ENCODE measurements at regions of chr3 and their contacts with region 1.

Region 1: GRCh38 chr3:171566803-171567422 is 106.7 kb upstream of the TNIK start:
- DNase-seq: no peak
- H3K4me3 ChIP-seq: no peak overlapping the region
- H3K27me3 ChIP-seq: peaks cover 2% of the 10 kb centered on the region; the same call in 1 of the 2 replicates
- CTCF ChIP-seq: peak; percentile 65

Region 2: DNA sequence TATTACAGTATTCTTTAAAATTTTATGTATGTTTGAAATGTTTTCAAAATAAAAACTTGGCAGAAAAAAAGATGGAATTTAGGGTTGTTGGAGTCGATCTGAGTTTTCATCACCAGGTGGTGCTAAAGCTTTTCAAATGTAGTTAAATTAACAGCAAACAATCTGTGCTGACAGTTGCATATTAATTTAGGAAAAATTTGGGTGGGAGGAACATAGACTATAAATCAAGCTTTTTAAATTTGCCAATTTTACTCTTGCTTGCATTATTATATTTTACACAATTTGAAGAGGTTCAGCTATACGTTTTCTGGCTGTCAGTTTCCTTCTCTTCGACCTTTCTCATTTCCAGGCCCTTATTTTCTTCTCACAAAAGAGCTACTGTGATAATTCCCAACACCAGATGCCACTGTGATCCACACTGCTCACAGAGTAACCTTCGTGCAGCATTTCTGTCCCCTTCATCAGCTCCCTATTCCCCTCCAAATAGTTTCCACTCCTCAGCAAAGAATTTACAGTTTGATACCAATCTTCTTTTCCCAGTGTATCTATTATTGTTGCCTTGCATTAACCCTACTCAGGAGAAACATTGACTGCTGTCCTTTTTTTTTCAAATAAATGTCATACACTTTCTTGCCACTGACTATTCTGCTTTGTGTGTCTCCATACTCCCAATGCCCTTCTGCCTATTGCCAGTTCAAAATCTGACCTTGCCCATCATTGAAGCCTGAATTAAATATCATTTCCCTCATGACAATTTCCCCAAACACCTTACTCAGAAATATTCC is 605.1 kb before region 1 on chr3:
- CTCF ChIA-PET with region 1: interaction called, 69 read pairs
- POLR2A ChIA-PET with region 1: no interaction called
- DNase-seq: no peak
- H3K4me3 ChIP-seq: no peak overlapping the region
- H3K27me3 ChIP-seq: no peaks in the 10 kb centered on the region
- CTCF ChIP-seq: peak; percentile 51

Region 3: GRCh38 chr3:171049861-171050444 is 517.0 kb before region 1 on chr3:
- CTCF ChIA-PET with region 1: interaction called, 42 read pairs
- POLR2A ChIA-PET with region 1: no interaction called
- DNase-seq: no peak
- H3K4me3 ChIP-seq: no peak overlapping the region
- H3K27me3 ChIP-seq: no peaks in the 10 kb centered on the region
- CTCF ChIP-seq: peak; percentile 74

Region 4: DNA sequence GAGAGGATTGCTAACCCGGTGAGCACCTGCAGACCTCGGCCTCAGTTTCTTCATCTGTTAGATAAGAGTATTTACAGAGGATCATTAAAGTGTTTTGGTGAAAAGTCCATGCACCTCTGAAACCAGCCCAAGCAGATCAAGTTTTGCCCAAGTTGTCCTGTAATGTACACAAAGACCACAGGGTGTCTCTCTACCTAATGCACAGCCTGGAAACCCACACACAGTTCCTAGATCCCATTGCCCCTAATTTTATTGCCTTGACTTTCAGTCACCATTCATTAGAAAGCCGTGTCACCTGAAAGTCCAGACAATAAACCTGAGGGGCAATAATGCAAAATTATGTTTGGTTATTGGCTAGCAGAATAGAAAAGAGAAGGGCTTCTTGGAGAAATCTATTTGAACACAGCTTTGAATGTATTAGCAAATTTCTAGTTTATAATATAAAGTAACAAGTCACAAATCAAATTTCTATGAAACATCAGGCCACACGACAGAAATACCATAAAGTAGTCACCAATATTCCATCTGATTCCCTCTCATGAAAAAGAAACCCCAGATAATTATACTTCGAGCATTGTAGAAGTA is 379.1 kb before region 1 on chr3:
- CTCF ChIA-PET with region 1: interaction called, 35 read pairs
- POLR2A ChIA-PET with region 1: interaction called, 3 read pairs
- DNase-seq: no peak
- H3K4me3 ChIP-seq: no peak overlapping the region
- H3K27me3 ChIP-seq: no peaks in the 10 kb centered on the region
- CTCF ChIP-seq: peak; percentile 68